Dendritic cell treated with granulocyte-macrophage colony-stimulating factor and Interleukin-4, amounts not matched to agents 40 ng/mL and 50 ng/mL, for 4 days (primary cell): ENCODE measurements at regions of chr7 and their contacts with region 1.

Region 1: GRCh38 chr7:38398725-38399321 is 125.4 kb upstream of the TARP start:
- H3K4me3 Mint-ChIP-seq: no peak overlapping the region
- H3K27ac Mint-ChIP-seq: no peak overlapping the region
- H3K4me1 Mint-ChIP-seq: peaks cover 23% of the 10 kb centered on the region
- H3K27me3 Mint-ChIP-seq: peaks cover 4% of the 10 kb centered on the region

Region 2: DNA sequence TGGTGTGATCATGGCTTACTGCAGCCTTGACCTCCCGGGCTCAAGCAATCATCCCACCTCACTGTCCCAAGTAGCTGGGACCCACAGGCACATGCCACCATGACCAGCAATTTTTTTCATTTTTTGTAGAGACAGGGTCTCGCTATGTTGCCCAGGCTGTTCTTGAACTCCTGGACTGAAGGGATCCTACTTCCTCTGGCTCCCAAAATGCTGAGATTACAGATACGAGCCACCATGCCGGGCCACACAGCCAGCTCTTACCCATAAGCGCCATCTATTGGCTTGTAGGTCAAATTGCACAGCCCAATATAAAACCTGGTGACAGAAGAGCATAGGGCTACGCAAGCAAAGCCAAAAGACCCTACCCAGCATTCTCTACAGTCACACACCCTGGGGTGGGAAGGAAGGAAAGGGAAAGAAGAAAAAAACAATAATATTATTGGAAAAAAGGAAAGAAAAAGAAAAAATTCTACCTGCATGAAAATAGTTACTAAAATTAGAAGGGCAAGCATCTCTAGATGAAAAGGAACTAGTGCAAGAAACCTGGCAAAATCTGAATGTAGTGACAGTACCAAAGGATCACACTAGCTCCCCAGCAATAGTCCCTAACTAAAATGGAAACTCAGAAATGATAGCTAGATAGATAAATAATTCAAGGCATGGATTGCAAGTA is 261.7 kb after region 1 on chr7:
- intact Hi-C with region 1: loop called (anchors 1 kb)
- H3K4me3 Mint-ChIP-seq: no peak overlapping the region
- H3K27ac Mint-ChIP-seq: no peak overlapping the region
- H3K4me1 Mint-ChIP-seq: peaks cover 39% of the 10 kb centered on the region
- H3K27me3 Mint-ChIP-seq: peaks cover 2% of the 10 kb centered on the region

Region 3: DNA sequence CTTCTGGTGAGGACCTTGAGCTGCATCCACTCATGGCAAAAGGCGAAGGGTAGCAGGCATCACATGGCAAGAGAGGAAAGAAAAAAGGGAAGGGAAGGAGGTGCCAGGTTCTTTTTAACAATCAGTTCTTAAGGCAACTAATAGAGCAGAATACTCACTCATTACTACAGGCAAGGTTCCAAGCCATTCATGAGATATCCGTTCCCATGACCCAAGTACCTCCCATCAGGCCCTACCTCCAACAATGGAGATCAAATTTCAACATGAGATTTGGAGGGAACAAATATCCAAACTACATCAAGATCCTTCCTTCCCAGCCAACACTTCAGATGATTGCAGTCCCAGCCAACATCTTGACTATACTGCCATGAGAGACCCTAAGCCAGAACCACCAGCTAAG is 1128.5 kb after region 1 on chr7:
- intact Hi-C with region 1: loop called (anchors 5 kb)
- H3K4me3 Mint-ChIP-seq: no peak overlapping the region
- H3K27ac Mint-ChIP-seq: no peak overlapping the region
- H3K4me1 Mint-ChIP-seq: no peaks in the 10 kb centered on the region
- H3K27me3 Mint-ChIP-seq: no peaks in the 10 kb centered on the region